Activated CD8-positive, alpha-beta T cell treated with anti-CD3 and anti-CD28 coated beads for 36 hours (primary cell): ENCODE measurements at regions of chr2 and their contacts with region 1.

Region 1: DNA sequence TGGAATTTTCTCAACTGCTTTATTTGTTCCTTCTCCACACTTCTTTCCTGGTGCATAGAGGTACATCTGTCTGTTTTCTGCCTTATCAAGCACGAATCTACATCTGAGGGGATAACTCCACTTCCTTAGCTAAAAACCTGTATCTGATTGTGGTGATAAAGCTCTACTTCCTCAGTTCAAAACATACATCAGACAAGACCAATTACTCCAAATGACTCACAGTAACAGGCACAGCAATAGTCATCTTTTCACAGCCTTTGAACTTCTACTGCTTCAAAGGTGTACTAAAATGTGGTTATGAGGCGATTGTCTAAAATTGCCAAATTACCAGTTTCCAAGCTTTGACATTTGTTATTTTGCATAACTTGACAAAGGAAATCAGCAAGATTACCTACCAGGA is 803.6 kb upstream of the ZEB2 start:
- DNase-seq: no peak
- ATAC-seq: peak; percentile 98
- H3K4me3 Mint-ChIP-seq: no peak overlapping the region
- H3K27ac Mint-ChIP-seq: peak overlapping the region; percentile 47
- H3K4me1 Mint-ChIP-seq: peaks cover 19% of the 10 kb centered on the region
- H3K27me3 Mint-ChIP-seq: peaks cover 7% of the 10 kb centered on the region
- CTCF ChIP-seq: no peak

Region 2: GRCh38 chr2:145260081-145260480 is 63.4 kb before region 1 on chr2:
- CTCF ChIA-PET with region 1: no interaction called
- POLR2A ChIA-PET with region 1: no interaction called
- intact Hi-C with region 1: loop called (anchors 5 kb)
- DNase-seq: no peak
- ATAC-seq: no peak
- H3K4me3 Mint-ChIP-seq: no peak overlapping the region
- H3K27ac Mint-ChIP-seq: no peak overlapping the region
- H3K4me1 Mint-ChIP-seq: peaks cover 12% of the 10 kb centered on the region
- H3K27me3 Mint-ChIP-seq: peaks cover 34% of the 10 kb centered on the region
- CTCF ChIP-seq: no peak

Region 3: DNA sequence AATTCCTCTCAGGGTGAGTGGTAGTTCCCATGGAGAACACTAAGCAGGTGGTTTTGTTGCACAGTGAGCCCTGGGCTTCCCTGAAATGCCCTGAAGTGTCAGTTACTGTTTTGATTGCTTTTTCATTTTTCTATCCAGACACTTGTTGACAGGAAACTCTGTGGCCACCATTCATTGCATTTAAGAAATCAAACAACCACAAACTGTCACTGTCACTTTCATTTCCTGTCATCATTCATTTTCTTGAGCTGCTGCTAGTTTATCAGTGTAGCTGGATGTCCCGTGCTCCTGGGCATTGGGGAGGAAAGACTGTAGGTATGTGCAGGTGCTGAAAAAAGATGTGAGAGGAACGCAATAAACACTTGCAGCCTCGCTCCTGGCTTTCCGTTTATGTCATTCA is 88.0 kb after region 1 on chr2:
- CTCF ChIA-PET with region 1: no interaction called
- POLR2A ChIA-PET with region 1: no interaction called
- intact Hi-C with region 1: loop called (anchors 5 kb)
- DNase-seq: peak; percentile 39
- ATAC-seq: peak; percentile 87
- H3K4me3 Mint-ChIP-seq: no peak overlapping the region
- H3K27ac Mint-ChIP-seq: peak overlapping the region; percentile 23
- H3K4me1 Mint-ChIP-seq: peaks cover 14% of the 10 kb centered on the region
- H3K27me3 Mint-ChIP-seq: peaks cover 21% of the 10 kb centered on the region
- CTCF ChIP-seq: no peak

Region 4: DNA sequence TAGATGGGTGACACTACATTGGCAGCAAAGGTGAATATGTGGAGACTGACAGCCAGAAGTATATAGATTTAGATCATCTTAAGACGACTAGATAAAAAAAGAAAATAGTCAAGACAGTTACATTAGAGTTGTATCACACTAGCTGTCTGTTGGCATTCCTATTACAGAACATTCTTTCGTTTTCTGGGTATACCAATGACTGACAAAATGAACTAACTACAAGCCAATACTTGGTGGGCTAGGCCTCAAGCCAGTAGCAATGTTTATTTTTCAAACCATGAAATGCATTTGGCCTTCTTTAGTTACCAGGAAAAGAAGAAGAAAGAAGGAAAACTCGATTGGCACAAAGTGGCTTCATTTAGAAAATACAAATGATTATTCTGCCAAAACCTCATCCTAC is 141.4 kb after region 1 on chr2:
- CTCF ChIA-PET with region 1: no interaction called
- POLR2A ChIA-PET with region 1: no interaction called
- intact Hi-C with region 1: no loop called
- DNase-seq: no peak
- ATAC-seq: no peak
- H3K4me3 Mint-ChIP-seq: no peak overlapping the region
- H3K27ac Mint-ChIP-seq: no peak overlapping the region
- H3K4me1 Mint-ChIP-seq: no peaks in the 10 kb centered on the region
- H3K27me3 Mint-ChIP-seq: no peaks in the 10 kb centered on the region
- CTCF ChIP-seq: no peak